CD4-positive, alpha-beta memory T cell (primary cell): ENCODE measurements at regions of chr5 and their contacts with region 1.

Region 1: GRCh38 chr5:43313035-43313853 is at the start of gene HMGCS1:
- DNase-seq: peak; percentile 99 to 100 (median 99)
- H3K4me3 ChIP-seq: peak within 1 kb of the TSS; percentile 59 to 96
- H3K4me3 Mint-ChIP-seq: peak within 1 kb of the TSS; percentile 95 to 99 (median 98)
- H3K27ac ChIP-seq: peak within 1 kb of the TSS; percentile 95
- H3K27ac Mint-ChIP-seq: peak within 1 kb of the TSS; percentile 78 to 99 (median 98)
- H3K4me1 ChIP-seq: peaks cover 21% of the 10 kb centered on the region
- H3K4me1 Mint-ChIP-seq: peaks cover 19 to 39% (median 25%) of the 10 kb centered on the region in 4 donors
- H3K27me3 ChIP-seq: no peaks in the 10 kb centered on the region
- H3K27me3 Mint-ChIP-seq: no peaks in the 10 kb centered on the region
- total RNA-seq, gene HMGCS1: 27.7 to 35.7 TPM

Region 2: GRCh38 chr5:42994246-42995151 is 318.7 kb before region 1 on chr5:
- CTCF ChIA-PET with region 1: no interaction called
- POLR2A ChIA-PET with region 1: interaction called, 29 read pairs
- intact Hi-C with region 1: loop called (anchors 2 kb)
- DNase-seq: peak; percentile 86 to 89 (median 88)
- H3K4me3 ChIP-seq: peak overlapping the region; percentile 72 to 76
- H3K4me3 Mint-ChIP-seq: peak overlapping the region; percentile 93 to 100 (median 100)
- H3K27ac ChIP-seq: peak overlapping the region; percentile 93
- H3K27ac Mint-ChIP-seq: peak overlapping the region; percentile 98 to 100 (median 100)
- H3K4me1 ChIP-seq: peaks cover 34% of the 10 kb centered on the region
- H3K4me1 Mint-ChIP-seq: peaks cover 14 to 69% (median 26%) of the 10 kb centered on the region in 4 donors
- H3K27me3 ChIP-seq: no peaks in the 10 kb centered on the region
- H3K27me3 Mint-ChIP-seq: no peaks in the 10 kb centered on the region

Region 3: GRCh38 chr5:43040287-43041098 is 272.8 kb before region 1 on chr5 and contains the start of gene ANXA2R:
- CTCF ChIA-PET with region 1: interaction called, 5 read pairs
- POLR2A ChIA-PET with region 1: interaction called, 28 read pairs
- intact Hi-C with region 1: loop called (anchors 1 kb)
- DNase-seq: peak; percentile 94 to 97 (median 97)
- H3K4me3 ChIP-seq: peak within 1 kb of the TSS; percentile 78 to 99
- H3K4me3 Mint-ChIP-seq: peak within 1 kb of the TSS; percentile 97 to 100 (median 98)
- H3K27ac ChIP-seq: peak within 1 kb of the TSS; percentile 98
- H3K27ac Mint-ChIP-seq: peak within 1 kb of the TSS; percentile 99 to 100 (median 99)
- H3K4me1 ChIP-seq: peaks cover 50% of the 10 kb centered on the region
- H3K4me1 Mint-ChIP-seq: peaks cover 19 to 82% (median 39%) of the 10 kb centered on the region in 4 donors
- H3K27me3 ChIP-seq: no peaks in the 10 kb centered on the region
- H3K27me3 Mint-ChIP-seq: no peaks in the 10 kb centered on the region
- total RNA-seq, gene ANXA2R: 43.4 to 47.8 TPM

Region 4: DNA sequence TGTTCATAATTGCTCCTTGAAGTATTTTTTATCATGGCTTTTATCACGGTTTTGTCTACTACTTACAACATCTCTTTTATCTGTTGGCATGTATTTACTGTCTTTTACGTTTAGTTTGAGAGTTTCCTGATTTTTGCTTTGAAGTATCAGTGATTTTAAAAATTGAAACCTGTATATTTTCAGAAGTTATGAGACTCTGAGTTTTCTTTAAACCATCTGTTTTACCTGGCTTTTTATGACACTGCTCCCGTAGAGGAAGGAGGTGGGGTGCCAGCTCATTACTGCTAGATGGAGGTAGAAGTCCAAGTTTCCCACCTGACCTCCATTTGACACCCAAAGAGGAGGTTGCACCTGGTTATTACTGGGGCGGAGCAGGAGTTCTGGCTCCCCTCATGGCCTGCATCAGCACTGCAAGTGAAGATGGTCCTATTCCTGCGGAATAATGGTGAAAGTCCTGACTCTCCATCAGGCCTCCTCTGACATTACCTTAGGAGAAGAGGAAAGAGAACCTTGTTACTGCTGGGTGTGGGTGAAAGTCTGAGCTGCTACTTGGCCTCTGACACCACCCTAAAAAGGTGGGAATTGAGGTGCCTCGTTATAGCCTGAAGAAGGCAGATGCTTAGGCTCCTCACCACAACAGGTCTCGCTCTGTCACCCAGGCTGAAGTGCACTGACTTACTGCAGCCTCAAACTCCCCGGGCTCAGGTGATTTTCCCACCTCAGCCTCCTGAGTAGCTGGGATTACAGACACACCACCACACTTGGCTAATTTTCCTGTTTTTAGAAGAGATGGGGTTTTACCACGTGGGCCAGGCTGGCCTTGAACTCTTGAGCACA is 202.4 kb before region 1 on chr5:
- CTCF ChIA-PET with region 1: interaction called, 6 read pairs
- POLR2A ChIA-PET with region 1: interaction called, 10 read pairs
- intact Hi-C with region 1: no loop called
- DNase-seq: peak in 4 of 5 donors; percentile 26 to 55 (median 40)
- H3K4me3 ChIP-seq: no peak overlapping the region
- H3K4me3 Mint-ChIP-seq: peak overlapping the region; percentile 18 to 79 (median 62)
- H3K27ac ChIP-seq: peak overlapping the region; percentile 36
- H3K27ac Mint-ChIP-seq: peak overlapping the region; percentile 63 to 91 (median 87)
- H3K4me1 ChIP-seq: peaks cover 32% of the 10 kb centered on the region
- H3K4me1 Mint-ChIP-seq: peaks cover 17 to 34% (median 24%) of the 10 kb centered on the region in 4 donors
- H3K27me3 ChIP-seq: no peaks in the 10 kb centered on the region
- H3K27me3 Mint-ChIP-seq: no peaks in the 10 kb centered on the region

Region 5: GRCh38 chr5:43396762-43397304 is 83.6 kb after region 1 on chr5:
- CTCF ChIA-PET with region 1: no interaction called
- POLR2A ChIA-PET with region 1: interaction called, 17 read pairs
- intact Hi-C with region 1: loop called (anchors 2 kb)
- DNase-seq: peak; percentile 61 to 66 (median 64)
- H3K4me3 ChIP-seq: peak overlapping the region; percentile 94 to 95
- H3K4me3 Mint-ChIP-seq: peak overlapping the region; percentile 92 to 100 (median 98)
- H3K27ac ChIP-seq: peak overlapping the region; percentile 58
- H3K27ac Mint-ChIP-seq: peak overlapping the region; percentile 84 to 99 (median 96)
- H3K4me1 ChIP-seq: peaks cover 15% of the 10 kb centered on the region
- H3K4me1 Mint-ChIP-seq: peaks cover 9 to 44% (median 21%) of the 10 kb centered on the region in 4 donors
- H3K27me3 ChIP-seq: no peaks in the 10 kb centered on the region
- H3K27me3 Mint-ChIP-seq: no peaks in the 10 kb centered on the region

Region 6: GRCh38 chr5:43602461-43603343 is 289.5 kb after region 1 on chr5 and contains the start of gene NNT:
- CTCF ChIA-PET with region 1: no interaction called
- POLR2A ChIA-PET with region 1: interaction called, 15 read pairs
- intact Hi-C with region 1: loop called (anchors 5 kb)
- DNase-seq: peak; percentile 75 to 84 (median 80)
- H3K4me3 ChIP-seq: peak within 1 kb of the TSS; percentile 91 to 99
- H3K4me3 Mint-ChIP-seq: peak within 1 kb of the TSS; percentile 90 to 98 (median 96)
- H3K27ac ChIP-seq: peak within 1 kb of the TSS; percentile 88
- H3K27ac Mint-ChIP-seq: peak within 1 kb of the TSS; percentile 91 to 98 (median 94)
- H3K4me1 ChIP-seq: peaks cover 38% of the 10 kb centered on the region
- H3K4me1 Mint-ChIP-seq: peaks cover 18 to 63% (median 49%) of the 10 kb centered on the region in 4 donors
- H3K27me3 ChIP-seq: no peaks in the 10 kb centered on the region
- H3K27me3 Mint-ChIP-seq: no peaks in the 10 kb centered on the region
- total RNA-seq, gene NNT: 56.1 to 57.6 TPM

Region 7: GRCh38 chr5:43874772-43875171 is 561.5 kb after region 1 on chr5:
- CTCF ChIA-PET with region 1: no interaction called
- POLR2A ChIA-PET with region 1: no interaction called
- intact Hi-C with region 1: no loop called
- DNase-seq: no peak
- H3K4me3 ChIP-seq: no peak overlapping the region
- H3K4me3 Mint-ChIP-seq: no peak overlapping the region
- H3K27ac ChIP-seq: no peak overlapping the region
- H3K27ac Mint-ChIP-seq: no peak overlapping the region
- H3K4me1 ChIP-seq: no peaks in the 10 kb centered on the region
- H3K4me1 Mint-ChIP-seq: no peaks in the 10 kb centered on the region
- H3K27me3 ChIP-seq: no peaks in the 10 kb centered on the region
- H3K27me3 Mint-ChIP-seq: peaks cover 0 to 4% of the 10 kb centered on the region in 2 donors